GM12878 (cell line): ENCODE measurements at regions of chr20 and their contacts with region 1.

Region 1: DNA sequence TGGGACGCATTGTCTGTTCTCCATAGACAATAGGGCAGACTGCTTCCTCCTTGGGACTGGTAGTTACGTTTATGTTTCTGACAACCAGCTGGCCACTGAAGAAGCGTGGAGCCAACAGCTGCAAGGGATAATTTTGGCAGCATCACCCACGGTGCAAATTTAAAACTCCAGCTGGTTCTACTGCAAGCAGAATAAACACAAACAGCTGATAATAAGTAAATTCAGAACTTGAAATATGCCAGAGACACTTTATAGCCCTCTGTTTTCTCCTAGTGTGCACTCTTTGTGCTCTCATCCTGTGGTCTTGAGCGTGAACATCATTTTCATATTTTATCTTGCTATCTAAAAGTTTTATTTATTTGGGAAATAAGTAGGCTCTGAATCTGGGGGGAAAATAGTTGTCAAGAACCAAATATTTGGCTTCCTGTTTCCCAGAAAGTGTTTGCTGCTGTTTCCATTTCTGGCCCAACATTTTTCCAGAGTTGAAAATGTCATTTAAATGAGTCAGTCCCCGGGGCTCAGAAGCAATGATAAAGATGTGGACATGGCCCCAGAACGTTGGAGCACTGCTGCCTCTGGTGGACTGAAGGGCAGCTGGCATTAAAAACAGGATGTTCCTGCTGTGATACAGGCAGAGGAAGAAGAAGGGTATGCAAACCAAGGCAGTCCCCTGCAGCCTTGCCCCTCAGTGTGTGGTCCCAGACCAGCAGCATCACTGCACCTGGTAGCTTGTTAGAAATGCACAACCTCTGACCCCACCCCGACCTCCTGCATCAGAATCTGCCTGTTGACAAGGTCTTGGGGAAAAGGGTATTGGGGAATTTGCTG is 12.5 kb upstream of the THBD start:
- DNase-seq: no peak
- ATAC-seq: peak; percentile 31; the same call in 1 of the 3 replicates
- H3K4me3 ChIP-seq: no peak overlapping the region
- H3K27ac ChIP-seq: no peak overlapping the region
- H3K4me1 ChIP-seq: no peaks in the 10 kb centered on the region
- H3K27me3 ChIP-seq: no peaks in the 10 kb centered on the region
- CTCF ChIP-seq: peak in 2 of 3 experiments; percentile 13 to 14; a peak in 1 of 6 replicates
- EP300 ChIP-seq: no peak
- POLR2A ChIP-seq: no peak
- RAD21 ChIP-seq: peak; percentile 28; the same call in 1 of the 2 replicates

Region 2: DNA sequence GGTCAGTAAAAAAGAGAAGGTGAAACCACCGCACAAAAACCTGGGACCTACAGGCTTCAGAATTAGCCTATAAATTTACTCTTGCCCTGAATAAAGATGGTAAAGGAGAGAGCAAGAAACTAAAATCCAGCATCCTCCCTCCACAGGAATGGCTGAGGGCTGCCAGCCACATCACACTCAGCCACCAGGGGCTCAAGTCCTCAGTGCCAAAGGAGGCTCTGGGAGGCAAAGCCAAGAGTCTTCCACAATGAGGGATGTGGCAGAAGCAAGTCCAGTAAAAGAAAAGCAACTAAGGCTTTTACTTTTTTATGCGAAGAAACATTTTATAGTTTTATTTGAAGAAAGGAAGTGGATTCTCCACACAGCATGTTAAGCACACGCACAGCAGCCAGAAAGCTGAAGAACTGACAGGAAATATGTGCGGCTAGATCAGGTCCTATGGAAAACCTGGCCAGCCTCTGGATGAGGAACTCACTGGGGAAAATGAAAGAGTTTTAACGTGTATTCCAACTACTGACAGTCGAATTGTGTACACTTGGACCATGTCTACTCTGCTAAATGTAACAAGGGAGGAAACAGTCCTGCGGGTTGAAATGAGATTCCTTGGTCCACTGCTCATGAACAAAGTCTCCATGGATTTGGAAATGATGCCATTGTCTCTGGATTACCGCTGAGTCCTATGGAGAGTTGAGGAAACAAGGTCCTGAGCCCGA is 246.2 kb before region 1 on chr20:
- CTCF ChIA-PET with region 1: no interaction called
- POLR2A ChIA-PET with region 1: no interaction called
- RAD21 ChIA-PET with region 1: no interaction called
- SMC1A ChIA-PET with region 1: no interaction called
- in situ Hi-C with region 1: no loop called
- intact Hi-C with region 1: no loop called
- DNase-seq: no peak
- ATAC-seq: no peak
- H3K4me3 ChIP-seq: no peak overlapping the region
- H3K27ac ChIP-seq: no peak overlapping the region
- H3K4me1 ChIP-seq: no peaks in the 10 kb centered on the region
- H3K27me3 ChIP-seq: 0 out of 4 replicates have a peak, but pooled peaks cover 0 to 3% of the 10 kb centered on the region in 2 experiments
- CTCF ChIP-seq: no peak
- EP300 ChIP-seq: no peak
- POLR2A ChIP-seq: no peak
- RAD21 ChIP-seq: no peak

Region 3: GRCh38 chr20:22918286-22918983 is 143.5 kb before region 1 on chr20:
- CTCF ChIA-PET with region 1: no interaction called
- POLR2A ChIA-PET with region 1: no interaction called
- RAD21 ChIA-PET with region 1: no interaction called
- SMC1A ChIA-PET with region 1: no interaction called
- in situ Hi-C with region 1: no loop called
- intact Hi-C with region 1: no loop called
- DNase-seq: no peak
- ATAC-seq: no peak
- H3K4me3 ChIP-seq: no peak overlapping the region
- H3K27ac ChIP-seq: no peak overlapping the region
- H3K4me1 ChIP-seq: no peaks in the 10 kb centered on the region
- H3K27me3 ChIP-seq: no peaks in the 10 kb centered on the region
- CTCF ChIP-seq: no peak
- EP300 ChIP-seq: no peak
- POLR2A ChIP-seq: no peak
- RAD21 ChIP-seq: no peak

Region 4: DNA sequence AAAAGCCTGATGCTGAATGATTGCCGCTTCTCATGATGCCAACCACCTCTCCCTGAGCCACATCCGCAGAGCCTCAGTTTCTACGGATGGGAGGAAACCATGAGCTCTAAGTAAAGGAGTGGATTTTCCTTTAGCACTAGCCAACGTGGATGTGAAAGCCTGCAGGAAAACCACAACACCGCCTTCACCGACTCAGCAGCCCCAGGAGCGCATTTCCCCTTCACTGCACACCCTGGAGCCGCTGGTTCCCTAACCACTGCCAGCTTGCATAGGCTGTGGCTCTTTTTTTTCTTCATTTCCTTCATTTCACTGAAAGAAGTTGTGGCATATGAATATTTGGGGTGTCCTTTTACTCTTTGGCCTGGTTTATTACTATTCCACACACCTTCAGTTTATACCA is 77.3 kb before region 1 on chr20:
- CTCF ChIA-PET with region 1: no interaction called
- POLR2A ChIA-PET with region 1: no interaction called
- RAD21 ChIA-PET with region 1: no interaction called
- SMC1A ChIA-PET with region 1: no interaction called
- in situ Hi-C with region 1: no loop called
- intact Hi-C with region 1: no loop called
- DNase-seq: no peak
- ATAC-seq: no peak
- H3K4me3 ChIP-seq: no peak overlapping the region
- H3K27ac ChIP-seq: no peak overlapping the region
- H3K4me1 ChIP-seq: no peaks in the 10 kb centered on the region
- H3K27me3 ChIP-seq: no peaks in the 10 kb centered on the region; a peak in 1 of 4 replicates
- CTCF ChIP-seq: no peak
- EP300 ChIP-seq: no peak
- POLR2A ChIP-seq: no peak
- RAD21 ChIP-seq: no peak

Region 5: GRCh38 chr20:23079016-23079351 is 17.0 kb after region 1 on chr20:
- CTCF ChIA-PET with region 1: interaction called, 19 read pairs
- POLR2A ChIA-PET with region 1: no interaction called
- RAD21 ChIA-PET with region 1: interaction called, 3 read pairs
- SMC1A ChIA-PET with region 1: interaction called, 9 read pairs
- in situ Hi-C with region 1: no loop called
- intact Hi-C with region 1: no loop called
- DNase-seq: no peak
- ATAC-seq: no peak
- H3K4me3 ChIP-seq: no peak overlapping the region
- H3K27ac ChIP-seq: no peak overlapping the region
- H3K4me1 ChIP-seq: no peaks in the 10 kb centered on the region
- H3K27me3 ChIP-seq: peaks cover 0 to 3% of the 10 kb centered on the region in 2 experiments; a peak in 1 of 4 replicates
- CTCF ChIP-seq: peak; percentile 25 to 50 (median 47); a peak in 3 of 6 replicates
- EP300 ChIP-seq: no peak
- POLR2A ChIP-seq: no peak
- RAD21 ChIP-seq: peak; percentile 31

Region 6: GRCh38 chr20:23193801-23194382 is 131.9 kb after region 1 on chr20:
- CTCF ChIA-PET with region 1: interaction called, 4 read pairs
- POLR2A ChIA-PET with region 1: no interaction called
- RAD21 ChIA-PET with region 1: no interaction called
- SMC1A ChIA-PET with region 1: interaction called, 6 read pairs
- in situ Hi-C with region 1: no loop called
- intact Hi-C with region 1: loop called (anchors 5 kb)
- DNase-seq: no peak
- ATAC-seq: no peak
- H3K4me3 ChIP-seq: no peak overlapping the region
- H3K27ac ChIP-seq: no peak overlapping the region
- H3K4me1 ChIP-seq: peaks cover 4% of the 10 kb centered on the region; the same call in 1 of the 2 replicates
- H3K27me3 ChIP-seq: no peaks in the 10 kb centered on the region
- CTCF ChIP-seq: no peak
- EP300 ChIP-seq: no peak
- POLR2A ChIP-seq: no peak
- RAD21 ChIP-seq: no peak

Region 7: GRCh38 chr20:23200918-23201317 is 139.0 kb after region 1 on chr20:
- CTCF ChIA-PET with region 1: interaction called, 11 read pairs
- POLR2A ChIA-PET with region 1: no interaction called
- RAD21 ChIA-PET with region 1: interaction called, 7 read pairs
- SMC1A ChIA-PET with region 1: interaction called, 6 read pairs
- in situ Hi-C with region 1: no loop called
- intact Hi-C with region 1: no loop called
- DNase-seq: no peak
- ATAC-seq: peak; percentile 84
- H3K4me3 ChIP-seq: no peak overlapping the region
- H3K27ac ChIP-seq: no peak overlapping the region
- H3K4me1 ChIP-seq: no peaks in the 10 kb centered on the region
- H3K27me3 ChIP-seq: peaks cover 0 to 4% of the 10 kb centered on the region in 2 experiments; a peak in 1 of 4 replicates
- CTCF ChIP-seq: peak; percentile 36 to 54 (median 40); a peak in 5 of 6 replicates
- EP300 ChIP-seq: no peak
- POLR2A ChIP-seq: no peak
- RAD21 ChIP-seq: peak; percentile 53